Left colon (tissue), 2 donors: ENCODE measurements at regions of chr3 and their contacts with region 1.

Region 1: DNA sequence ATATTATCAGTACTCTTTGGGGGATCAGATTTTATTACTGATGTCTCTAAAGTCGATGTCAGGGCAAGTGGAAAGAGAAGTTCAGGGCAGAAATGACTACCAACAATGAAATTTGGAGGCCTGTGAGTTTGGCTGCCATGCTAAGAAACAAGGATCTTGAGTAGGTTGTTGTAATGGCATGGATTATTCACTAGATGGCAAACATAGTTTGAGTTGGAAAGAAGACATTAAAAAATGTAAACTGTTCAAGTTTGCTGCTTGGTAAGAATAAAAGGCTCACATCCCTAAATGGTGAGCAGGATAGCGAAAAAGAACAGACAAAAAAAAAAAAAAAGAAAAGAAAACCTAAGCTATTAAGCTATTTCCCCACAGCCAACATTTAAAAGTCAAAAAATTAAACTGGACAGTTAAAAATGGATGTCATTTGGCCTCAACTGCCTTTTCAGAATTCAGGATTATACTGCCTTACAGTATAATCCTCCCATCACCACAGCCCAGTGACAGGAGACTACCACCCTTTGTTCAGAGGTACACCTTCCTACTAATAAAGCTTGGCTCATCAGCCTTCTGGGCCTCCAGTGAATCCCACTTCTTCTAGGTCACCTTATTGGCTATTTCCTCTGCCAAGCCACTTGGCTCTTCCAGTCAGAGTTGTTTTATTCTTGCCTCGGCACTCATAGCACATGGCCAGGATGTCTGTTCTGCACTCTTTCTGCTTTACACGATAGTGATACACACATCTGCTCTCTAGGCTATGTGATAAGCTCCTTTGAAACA is 163.7 kb downstream of the PLD1 start:
- DNase-seq: no peak
- ATAC-seq: peak; percentile 69

Region 2: GRCh38 chr3:171443211-171443957 is 203.2 kb before region 1 on chr3:
- intact Hi-C with region 1: no loop called
- DNase-seq: no peak
- ATAC-seq: no peak

Region 3: DNA sequence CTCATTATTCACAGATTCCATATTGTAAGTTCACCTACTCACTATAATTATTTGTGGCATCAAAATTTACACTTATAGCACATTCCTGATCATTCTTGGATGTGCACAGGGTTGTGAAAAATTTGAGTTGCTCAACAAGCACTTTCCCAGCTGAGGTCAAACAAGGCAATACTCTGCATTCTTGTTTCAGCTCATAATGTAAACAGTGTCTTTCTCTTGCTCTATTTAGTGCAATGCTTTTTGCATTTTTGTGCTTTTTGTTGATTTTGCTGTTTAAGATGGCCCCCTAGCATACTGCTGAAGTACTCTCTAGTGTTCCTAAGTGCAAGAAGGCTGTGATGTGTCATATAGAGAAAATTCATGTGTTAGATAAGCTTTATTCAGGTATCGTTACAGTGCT is 119.7 kb before region 1 on chr3:
- intact Hi-C with region 1: no loop called
- DNase-seq: no peak
- ATAC-seq: no peak

Region 4: DNA sequence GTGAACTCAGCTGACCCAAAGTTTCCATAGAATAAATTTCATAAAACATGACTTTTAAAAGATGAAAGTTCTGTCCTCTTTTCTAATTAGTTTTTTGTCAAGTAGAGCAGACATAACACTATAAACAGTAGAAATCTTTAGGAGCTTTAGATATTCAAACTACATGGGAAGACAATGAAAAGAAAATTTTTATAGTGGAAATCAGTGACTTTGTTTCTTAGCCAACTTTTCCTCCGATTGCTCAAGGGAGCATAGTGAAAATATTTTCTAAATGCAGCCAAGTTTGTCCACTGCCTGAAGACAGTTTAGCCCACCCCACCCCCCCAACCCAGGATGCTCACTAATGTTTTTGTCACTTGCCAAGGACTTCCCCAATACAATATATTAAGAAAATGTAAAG is 48.9 kb after region 1 on chr3:
- intact Hi-C with region 1: no loop called
- DNase-seq: no peak
- ATAC-seq: no peak

Region 5: DNA sequence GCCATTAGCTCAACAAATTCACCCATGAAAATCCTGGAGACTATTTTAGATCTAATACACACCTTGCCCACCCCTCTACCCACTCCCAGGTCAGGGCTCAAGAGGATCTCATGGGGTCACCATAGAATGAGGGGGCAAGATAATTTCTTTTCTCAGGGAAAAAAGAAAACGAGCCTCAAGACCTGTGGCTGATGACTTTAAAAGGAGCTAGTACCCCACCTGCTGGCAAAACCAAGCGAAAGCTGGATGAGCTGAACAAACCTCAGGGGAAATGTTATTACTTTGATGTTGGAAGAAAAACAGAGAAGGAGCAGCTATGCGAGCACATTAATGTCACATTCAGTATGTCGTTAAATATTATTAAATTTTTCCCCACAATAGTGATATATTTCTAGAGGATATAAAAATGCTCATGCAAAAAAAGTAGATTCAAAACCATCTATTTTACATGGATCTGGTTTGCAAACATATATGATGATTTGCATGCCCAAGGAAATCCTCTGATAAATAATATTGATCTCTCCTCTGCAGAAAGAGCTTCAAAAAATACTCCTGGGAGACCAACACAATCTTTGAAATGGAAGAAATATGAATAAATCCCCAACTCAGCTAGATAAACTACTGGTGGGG is 126.0 kb after region 1 on chr3:
- intact Hi-C with region 1: loop called in 1 of 2 experiments (anchors 5 kb)
- DNase-seq: peak in 1 of 2 donors; percentile 74
- ATAC-seq: peak; percentile 44

Region 6: GRCh38 chr3:171829841-171830517 is 183.4 kb after region 1 on chr3:
- intact Hi-C with region 1: loop called in 1 of 2 experiments (anchors 5 kb)
- DNase-seq: peak; percentile 71 to 79
- ATAC-seq: peak; percentile 99

Region 7: DNA sequence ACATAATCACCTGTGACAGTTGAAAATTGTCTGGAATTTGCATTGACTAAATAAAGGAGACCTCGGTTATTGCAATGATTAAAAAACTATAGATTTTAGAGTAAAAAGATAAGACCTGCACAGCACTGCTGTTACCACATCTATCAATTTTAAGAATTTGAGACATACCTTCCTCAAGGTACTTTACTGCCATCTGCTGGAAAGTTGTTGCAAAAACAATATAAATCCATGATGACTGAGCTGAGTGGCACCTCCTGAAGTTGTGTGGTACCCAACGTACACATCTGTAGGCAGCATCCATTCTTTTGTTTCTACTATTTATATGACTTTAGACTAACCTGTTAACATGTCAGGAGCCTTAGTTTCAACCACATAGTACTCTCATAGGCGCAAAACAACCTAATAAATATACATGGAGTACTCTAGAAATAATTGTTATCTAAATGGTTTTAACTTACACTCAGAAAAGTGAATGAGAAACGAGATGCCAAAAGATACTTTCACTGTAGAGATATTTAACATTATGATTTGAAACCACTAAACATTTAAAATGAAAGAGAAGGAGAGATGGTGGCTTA is 695.0 kb after region 1 on chr3:
- intact Hi-C with region 1: loop called in 1 of 2 experiments (anchors 10 kb)
- DNase-seq: no peak
- ATAC-seq: peak; percentile 72

Region 8: GRCh38 chr3:172673210-172673679 is 1026.7 kb after region 1 on chr3:
- intact Hi-C with region 1: loop called in 1 of 2 experiments (anchors 10 kb)
- DNase-seq: peak; percentile 71 to 76
- ATAC-seq: peak; percentile 84